Left colon (tissue), 2 donors: ENCODE measurements at regions of chr4 and their contacts with region 1.

Region 1: GRCh38 chr4:38319456-38320342 is 344.3 kb upstream of the KLF3 start:
- DNase-seq: peak; percentile 88 to 97
- ATAC-seq: peak; percentile 67

Region 2: DNA sequence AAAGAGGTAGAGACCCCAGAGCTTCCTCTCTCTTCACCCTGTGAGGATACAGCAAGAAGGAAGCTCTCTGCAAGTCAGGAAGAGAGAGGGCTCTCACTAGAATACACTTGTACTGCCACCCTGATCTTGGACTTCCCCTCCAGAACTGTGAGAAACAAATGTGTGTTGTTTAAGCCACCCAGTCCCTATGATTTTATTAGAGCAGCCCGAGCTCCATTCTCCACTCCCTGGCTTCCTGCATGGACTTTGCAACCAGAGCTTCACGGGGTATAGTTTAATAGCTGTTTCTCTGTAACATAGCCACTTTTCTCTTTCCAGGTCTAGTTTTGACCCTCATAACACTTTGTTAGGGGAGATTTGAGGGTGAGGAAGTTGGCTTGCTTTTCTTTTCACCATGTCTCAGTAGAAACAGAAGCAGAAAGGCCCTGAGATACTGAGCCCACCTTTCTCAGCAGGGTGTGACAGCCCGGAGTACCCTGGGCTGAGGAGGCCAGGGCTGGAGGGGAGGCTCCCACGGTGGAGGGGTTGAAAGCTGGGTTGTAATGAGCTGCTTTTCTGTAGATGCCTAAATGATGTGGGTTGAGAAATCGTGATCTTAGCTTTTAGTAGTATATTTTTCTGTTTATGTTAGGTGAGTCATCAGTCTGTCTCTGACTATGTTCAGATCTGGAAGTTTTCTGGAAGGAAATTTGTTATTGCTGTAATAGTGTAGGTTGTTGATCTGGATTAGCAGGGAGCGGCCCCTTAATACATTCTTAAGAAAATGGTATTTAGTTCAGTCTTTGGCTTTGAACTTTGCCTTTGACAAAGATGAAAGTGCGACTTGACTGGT is 240.9 kb before region 1 on chr4:
- intact Hi-C with region 1: loop called in 1 of 2 experiments (anchors 10 kb)
- DNase-seq: peak in 1 of 2 donors; percentile 74
- ATAC-seq: peak; percentile 87

Region 3: DNA sequence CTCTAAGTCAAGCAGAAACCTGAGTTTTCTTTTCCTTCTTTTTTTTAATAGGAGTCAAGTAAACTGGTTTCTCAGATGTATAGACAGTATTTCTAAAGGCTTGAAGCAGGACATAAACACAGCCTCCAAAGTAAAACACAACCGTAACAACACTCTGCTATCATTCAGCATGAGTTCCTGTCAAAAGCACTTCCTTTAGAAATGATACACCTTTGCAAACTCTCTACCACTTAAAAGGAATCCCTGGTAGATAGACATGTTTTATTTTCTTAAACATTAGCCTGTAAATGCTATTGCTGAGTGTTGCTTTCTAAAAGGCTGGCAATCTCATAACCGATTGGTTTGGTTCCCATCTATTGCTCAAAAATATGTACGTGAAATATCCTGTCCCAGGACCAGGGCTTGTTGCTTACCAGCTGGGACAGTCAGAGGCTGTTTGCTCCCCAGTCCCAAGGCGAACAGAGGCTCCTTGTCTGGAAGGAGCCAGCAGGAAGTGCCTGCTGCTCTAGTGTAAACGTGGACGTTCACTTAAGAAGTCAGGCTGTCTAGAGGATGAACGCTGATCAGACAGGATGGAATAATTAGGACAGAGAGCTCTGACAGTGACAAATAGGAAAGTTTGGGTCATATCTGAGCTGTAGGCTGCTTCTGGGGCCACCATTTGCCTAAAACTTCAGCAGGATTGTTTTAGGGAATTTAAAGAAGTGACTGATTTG is 170.4 kb after region 1 on chr4:
- intact Hi-C with region 1: no loop called
- DNase-seq: peak; percentile 42 to 68
- ATAC-seq: peak; percentile 95

Region 4: DNA sequence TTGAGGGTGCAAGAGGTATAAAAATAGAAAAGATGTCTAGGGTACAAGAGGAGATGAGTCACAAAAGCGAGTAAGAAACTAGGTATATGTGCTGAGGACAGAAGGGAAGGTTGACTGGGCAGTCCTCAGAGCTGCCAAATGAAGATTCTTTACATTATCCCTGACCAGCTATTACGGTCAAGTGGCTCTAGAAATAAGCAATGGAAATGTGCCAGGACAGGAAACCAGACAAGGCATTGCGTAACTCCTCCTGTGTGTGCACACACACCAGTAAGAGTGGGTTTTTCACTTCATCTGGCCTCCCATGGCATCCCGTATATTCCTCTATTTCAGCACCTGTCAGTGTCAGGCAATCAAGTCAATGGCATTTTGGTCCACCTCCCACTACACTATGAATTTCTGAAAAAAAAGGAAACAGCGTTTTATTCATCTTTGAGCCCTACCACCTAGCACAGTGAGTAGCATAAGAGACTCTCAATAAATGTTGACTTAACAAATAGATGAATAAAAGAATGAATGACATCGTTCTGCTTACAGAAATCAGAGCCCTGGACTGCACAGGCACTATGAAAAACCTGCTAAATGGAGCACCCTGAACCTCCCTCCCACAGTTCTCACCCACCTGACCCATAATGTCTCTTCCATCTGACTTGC is 281.7 kb after region 1 on chr4:
- intact Hi-C with region 1: no loop called
- DNase-seq: no peak
- ATAC-seq: peak; percentile 25

Region 5: DNA sequence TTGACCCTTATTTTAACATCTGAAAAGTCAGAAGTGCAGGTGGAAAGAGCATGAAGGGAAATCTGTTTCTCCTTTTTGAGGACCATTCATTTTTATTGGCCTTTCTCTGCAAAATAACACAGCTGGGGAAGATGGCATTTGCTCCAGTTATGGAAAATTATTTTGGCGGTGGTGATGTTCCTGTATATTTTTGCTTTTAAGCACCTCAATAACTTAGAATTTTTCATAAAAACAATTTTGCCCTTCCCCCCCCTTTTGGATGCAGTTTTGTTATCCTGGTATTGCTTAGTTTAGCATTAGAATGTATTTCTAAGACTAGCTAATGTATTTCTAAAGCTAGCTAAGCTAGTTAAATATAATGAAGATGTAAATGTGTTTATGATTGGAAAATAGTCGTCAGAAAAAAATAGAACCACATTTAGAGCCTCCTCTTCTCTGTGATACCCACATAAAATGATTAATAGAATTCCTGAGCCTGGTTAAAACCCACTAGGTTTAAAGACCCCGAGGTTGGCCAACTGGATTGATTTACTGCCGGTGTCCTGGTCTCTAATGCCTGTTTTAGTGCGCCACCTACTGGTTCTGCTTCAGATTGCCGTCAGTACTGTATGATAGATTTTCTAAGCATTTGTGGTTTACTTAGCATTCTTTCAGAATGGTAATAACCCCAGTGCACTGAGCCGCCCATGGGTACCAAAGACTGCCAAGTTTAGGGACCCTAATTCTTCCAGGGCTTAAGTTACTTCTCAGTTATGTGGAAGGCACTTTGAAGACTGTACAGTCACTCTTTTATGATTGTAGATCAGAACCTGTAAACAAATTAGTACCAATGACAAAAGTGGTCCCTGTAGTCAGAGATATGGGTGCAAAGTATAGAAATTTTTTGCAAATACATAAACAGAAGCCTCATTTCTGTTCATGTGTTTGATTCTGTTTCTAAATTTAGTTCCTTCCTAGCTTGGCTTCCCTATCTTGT is 355.7 kb after region 1 on chr4:
- intact Hi-C with region 1: loop called (anchors 5 to 10 kb)
- DNase-seq: peak; percentile 74 to 89
- ATAC-seq: peak; percentile 13